ENCODE measurements at regions of chr17 and their contacts with region 1.

Region 1: DNA sequence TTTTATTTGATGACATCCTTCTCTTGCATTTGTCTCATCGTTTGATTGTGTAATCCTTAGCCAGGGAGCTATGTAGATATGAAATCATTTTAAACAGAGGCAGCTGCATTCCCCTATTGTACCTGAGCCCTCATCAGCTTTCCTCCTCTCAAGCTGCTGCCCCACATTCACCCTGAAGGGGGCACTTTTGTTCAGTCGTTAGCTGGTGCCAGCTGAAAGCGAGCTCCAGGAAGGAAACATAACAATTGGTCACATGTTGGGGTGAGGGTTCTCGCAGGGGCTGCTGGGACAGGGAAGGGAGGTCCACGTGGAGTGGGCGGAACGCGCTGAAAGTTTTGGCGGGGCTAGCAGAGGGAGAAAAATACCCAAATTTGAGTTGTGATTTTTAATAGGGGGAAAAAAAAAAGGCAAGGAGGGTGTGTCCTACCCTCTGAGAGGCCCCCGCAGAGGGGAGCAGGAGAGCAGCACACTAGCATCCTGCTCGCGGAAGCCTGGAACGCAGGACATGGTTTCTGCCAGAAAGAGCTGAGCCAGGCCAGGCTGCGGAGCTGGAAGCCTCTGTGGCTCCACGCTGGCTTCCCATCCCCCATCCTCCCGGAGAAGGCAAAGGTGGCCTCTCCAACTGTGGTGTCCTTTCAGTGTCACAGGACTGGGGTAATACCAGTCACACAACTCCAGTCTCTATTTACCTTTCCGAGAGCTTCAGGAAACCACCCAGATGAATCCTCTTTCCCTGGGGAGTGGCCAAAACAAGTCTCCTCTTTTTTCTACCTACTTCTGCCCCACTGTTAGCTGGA is 8.5 kb upstream of the MSL1 start:
- DNase-seq: peak; percentile 93 to 97 (median 97)
- H3K4me3 ChIP-seq: peak overlapping the region in 6 of 7 experiments; percentile 54 to 82 (median 64)
- H3K27ac ChIP-seq: peak overlapping the region in 1 of 2 experiments; percentile 64
- H3K4me1 ChIP-seq: peaks cover 13 to 63% (median 55%) of the 10 kb centered on the region in 4 experiments
- H3K27me3 ChIP-seq: no peaks in the 10 kb centered on the region

Region 2: DNA sequence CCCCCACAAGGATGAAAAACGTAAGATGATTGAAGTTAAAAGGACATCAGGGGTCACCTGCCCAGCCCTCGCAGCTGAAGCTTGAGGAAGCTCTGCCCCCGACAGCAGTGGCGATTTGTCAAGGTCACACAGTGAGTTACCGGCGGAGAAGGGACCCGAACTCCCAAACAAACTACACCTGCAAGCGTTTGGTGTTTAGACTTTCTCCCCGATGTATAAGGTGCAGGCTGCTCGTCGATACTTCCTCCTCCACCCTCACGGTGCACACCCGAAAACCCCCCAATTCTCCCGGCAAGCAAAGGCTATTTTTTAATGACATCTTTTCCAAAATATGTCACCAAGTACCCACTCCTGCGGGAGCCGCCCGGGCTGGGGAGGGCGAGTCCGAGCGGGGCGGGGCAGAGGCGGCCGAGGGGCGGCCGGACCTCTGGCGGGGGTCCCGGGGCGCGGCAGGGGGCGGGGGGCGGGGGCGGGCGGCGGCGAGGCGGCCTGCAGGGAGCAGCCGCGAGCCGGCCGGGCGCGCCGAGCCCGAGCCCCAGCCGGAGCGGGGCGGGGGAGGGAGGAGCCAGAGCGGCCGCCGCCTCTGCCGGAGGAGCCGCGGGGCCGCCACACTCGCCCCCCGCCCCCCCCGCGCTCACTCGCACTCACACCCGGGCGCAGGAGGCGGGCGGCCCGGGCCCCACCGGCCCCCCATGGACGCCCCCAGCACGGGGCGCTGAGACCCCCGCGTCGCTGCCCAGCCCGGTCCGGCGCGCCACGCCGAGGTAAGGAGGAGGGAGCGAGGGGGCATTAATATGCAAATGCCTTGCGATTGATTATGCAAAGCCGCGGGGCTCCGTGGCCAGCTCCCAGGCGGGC is 50.8 kb before region 1 on chr17 and contains the start of gene THRA:
- CTCF ChIA-PET with region 1: interaction called, 24 read pairs
- POLR2A ChIA-PET with region 1: no interaction called
- DNase-seq: peak in 2 of 3 donors; percentile 72 to 79
- H3K4me3 ChIP-seq: peak within 1 kb of the TSS; percentile 71 to 96 (median 90)
- H3K27ac ChIP-seq: peak within 1 kb of the TSS in 1 of 2 experiments; percentile 69
- H3K4me1 ChIP-seq: peaks cover 8 to 40% (median 37%) of the 10 kb centered on the region in 4 experiments
- H3K27me3 ChIP-seq: peaks cover 0 to 5% (median 0%) of the 10 kb centered on the region in 5 experiments

Region 3: DNA sequence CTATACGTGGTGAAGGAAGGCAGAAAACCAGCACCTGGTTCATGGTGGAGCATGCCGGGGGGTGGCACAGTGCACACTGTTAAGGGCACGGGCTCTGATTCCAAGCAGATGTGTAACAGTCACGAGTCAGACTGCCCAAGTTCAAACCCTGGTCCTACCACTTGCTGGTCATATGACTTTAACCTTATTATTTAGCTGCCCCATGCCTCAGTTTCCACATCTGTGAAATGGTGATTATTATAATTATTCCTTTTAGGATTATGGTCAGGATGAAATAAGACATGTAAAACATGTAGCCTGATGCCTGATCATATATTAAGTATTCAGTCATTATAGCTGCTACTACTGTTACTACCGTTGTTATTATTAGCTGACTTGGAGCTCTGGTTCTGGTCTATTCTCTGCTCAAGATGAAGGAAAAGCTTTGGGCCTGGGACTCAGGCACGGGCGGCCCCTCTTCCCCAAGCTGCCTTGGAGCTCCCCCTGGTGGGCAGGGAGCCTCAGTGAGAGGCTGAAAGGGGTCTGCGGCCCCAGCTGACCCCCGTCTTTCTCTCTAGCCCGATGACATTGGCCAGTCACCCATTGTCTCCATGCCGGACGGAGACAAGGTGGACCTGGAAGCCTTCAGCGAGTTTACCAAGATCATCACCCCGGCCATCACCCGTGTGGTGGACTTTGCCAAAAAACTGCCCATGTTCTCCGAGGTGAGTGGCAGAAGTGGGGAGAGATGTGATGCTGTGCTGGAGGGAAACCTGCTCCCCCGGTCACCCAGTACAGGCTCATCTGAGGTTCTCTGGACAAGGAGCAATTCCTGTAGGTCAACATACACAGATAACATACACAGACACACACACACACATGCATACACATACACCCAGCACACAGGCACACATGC is 26.9 kb before region 1 on chr17:
- CTCF ChIA-PET with region 1: interaction called, 28 read pairs
- POLR2A ChIA-PET with region 1: no interaction called
- DNase-seq: peak; percentile 58 to 79 (median 75)
- H3K4me3 ChIP-seq: no peak overlapping the region
- H3K27ac ChIP-seq: no peak overlapping the region
- H3K4me1 ChIP-seq: no peaks in the 10 kb centered on the region
- H3K27me3 ChIP-seq: no peaks in the 10 kb centered on the region

Region 4: DNA sequence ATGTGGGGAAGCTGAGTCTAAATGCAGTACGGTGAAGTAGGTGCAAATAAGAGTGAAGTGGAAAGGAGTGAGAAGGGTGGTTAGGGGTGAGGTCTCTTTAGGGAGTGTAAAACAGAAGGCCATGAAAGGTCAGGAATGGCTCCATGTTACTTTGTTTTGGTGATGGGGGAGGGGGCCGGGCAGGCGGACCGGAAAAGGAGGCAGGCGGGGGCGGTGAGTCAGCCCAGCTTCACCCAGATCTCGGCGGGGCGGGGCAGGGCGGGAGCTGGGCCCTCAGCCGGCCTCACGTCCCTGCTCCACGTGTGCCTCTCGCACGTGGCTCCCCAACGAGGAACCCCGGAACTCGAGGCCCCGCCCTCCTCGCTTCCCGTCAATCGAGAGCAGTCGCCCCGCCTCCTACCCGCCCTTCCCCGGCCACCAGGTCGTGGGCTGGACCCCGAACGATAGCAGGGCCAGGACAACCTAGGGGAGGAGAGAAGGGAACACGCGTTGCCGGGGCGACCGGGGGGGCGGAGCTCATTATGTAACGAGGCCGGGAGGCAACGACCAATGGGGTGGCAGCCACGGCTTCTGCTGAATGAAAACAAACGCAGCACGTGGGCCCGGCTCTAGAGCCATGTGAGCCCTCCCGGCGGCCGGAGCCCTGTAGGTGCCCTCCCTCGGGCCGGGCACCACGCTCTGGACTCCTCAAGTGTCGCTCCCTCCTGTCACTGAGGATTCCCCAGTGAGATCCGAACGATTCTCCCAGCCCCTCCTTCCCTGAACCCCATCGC is 14.3 kb before region 1 on chr17:
- CTCF ChIA-PET with region 1: interaction called, 48 read pairs
- POLR2A ChIA-PET with region 1: interaction called, 7 read pairs
- DNase-seq: peak; percentile 90 to 95 (median 94)
- H3K4me3 ChIP-seq: peak overlapping the region in 6 of 7 experiments; percentile 40 to 87 (median 72)
- H3K27ac ChIP-seq: peak overlapping the region; percentile 9 to 78
- H3K4me1 ChIP-seq: peaks cover 8 to 69% (median 58%) of the 10 kb centered on the region in 4 experiments
- H3K27me3 ChIP-seq: no peaks in the 10 kb centered on the region

Region 5: GRCh38 chr17:40157973-40158372 is 44.7 kb after region 1 on chr17:
- CTCF ChIA-PET with region 1: interaction called, 14 read pairs
- POLR2A ChIA-PET with region 1: no interaction called
- DNase-seq: peak in 2 of 3 donors; percentile 16 to 33
- H3K4me3 ChIP-seq: no peak overlapping the region
- H3K27ac ChIP-seq: no peak overlapping the region
- H3K4me1 ChIP-seq: peaks cover 0 to 15% (median 7%) of the 10 kb centered on the region in 4 experiments
- H3K27me3 ChIP-seq: no peaks in the 10 kb centered on the region

Region 6: DNA sequence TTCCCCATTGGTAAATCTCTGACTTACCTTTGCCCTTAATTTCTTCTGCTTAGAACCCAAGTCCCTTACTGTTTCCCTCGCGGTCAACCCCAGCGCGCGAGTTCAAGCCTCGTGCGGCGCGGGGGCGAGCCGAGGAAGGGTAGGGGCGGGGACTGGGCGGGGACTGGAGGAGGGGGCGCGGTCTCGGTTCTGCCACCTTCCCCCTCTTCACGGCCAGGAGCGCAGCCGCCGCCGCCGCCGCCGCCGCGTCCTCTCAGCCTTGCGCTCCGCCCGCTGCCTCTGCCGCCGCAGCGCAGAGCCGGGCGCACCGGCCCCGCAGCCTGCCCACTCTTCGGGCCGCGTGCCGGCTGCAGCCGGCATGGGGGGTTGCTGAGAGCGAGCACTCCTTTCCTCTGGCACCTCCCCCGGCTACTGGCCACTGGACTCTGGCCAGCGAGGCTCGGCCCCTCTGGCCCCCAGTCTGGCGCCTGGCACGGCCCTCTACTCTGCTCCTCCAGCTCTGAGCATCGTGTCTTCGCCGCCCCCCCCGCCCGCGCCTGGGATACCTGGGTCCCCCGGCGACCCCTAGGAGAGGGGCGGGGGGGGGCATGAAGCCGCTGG is 64.1 kb after region 1 on chr17 and contains the start of gene RAPGEFL1:
- CTCF ChIA-PET with region 1: interaction called, 28 read pairs
- POLR2A ChIA-PET with region 1: no interaction called
- DNase-seq: peak; percentile 76 to 88 (median 83)
- H3K4me3 ChIP-seq: peak within 1 kb of the TSS; percentile 45 to 75 (median 52)
- H3K27ac ChIP-seq: no peak within 1 kb of the TSS
- H3K4me1 ChIP-seq: peaks cover 0 to 16% (median 11%) of the 10 kb centered on the region in 4 experiments
- H3K27me3 ChIP-seq: peaks cover 0 to 8% (median 0%) of the 10 kb centered on the region in 5 experiments